ENCODE measurements at regions of chr18 and their contacts with region 1.

Region 1: GRCh38 chr18:2606335-2606734 is 35.0 kb downstream of the NDC80 start:
- DNase-seq: no peak
- H3K4me3 Mint-ChIP-seq: no peak overlapping the region
- H3K27ac Mint-ChIP-seq: peak overlapping the region; percentile 79
- H3K4me1 Mint-ChIP-seq: peaks cover 49% of the 10 kb centered on the region
- H3K27me3 Mint-ChIP-seq: no peaks in the 10 kb centered on the region

Region 2: GRCh38 chr18:2627821-2628276 is 21.5 kb after region 1 on chr18:
- CTCF ChIA-PET with region 1: interaction called, 4 read pairs
- intact Hi-C with region 1: loop called (anchors 1 kb)
- DNase-seq: peak; percentile 66
- H3K4me3 Mint-ChIP-seq: no peak overlapping the region
- H3K27ac Mint-ChIP-seq: peak overlapping the region; percentile 50
- H3K4me1 Mint-ChIP-seq: peaks cover 30% of the 10 kb centered on the region
- H3K27me3 Mint-ChIP-seq: no peaks in the 10 kb centered on the region